ENCODE measurements at regions of chr5 and their contacts with region 1.

Region 1: DNA sequence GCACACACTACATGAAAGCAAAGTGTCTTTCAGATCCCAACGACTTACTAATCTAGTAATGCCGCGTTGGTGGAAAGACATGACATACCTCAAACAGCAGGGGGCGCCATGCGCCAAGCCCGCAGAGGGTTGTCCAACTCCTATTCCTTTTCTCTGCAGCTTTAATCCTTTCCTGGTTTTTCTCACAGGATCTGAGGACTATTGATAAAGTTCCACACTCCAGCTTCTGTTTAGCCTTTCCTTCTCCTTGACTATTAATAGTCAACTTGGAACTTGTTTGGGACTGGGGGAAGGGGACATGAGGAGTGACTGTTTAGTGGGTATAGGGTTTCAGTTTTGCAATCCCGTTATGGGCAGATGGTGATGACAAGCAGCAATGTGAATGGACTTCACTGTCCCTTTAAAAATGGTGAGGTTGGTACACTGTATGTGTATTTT is 62.9 kb downstream of the OTULIN start:
- DNase-seq: peak; percentile 77
- ATAC-seq: peak; percentile 65
- H3K4me3 ChIP-seq: no peak overlapping the region
- H3K4me3 Mint-ChIP-seq: no peak overlapping the region
- H3K27ac ChIP-seq: no peak overlapping the region
- H3K27ac Mint-ChIP-seq: no peak overlapping the region
- H3K4me1 ChIP-seq: peaks cover 0 to 12% of the 10 kb centered on the region in 2 donors
- H3K4me1 Mint-ChIP-seq: peaks cover 18% of the 10 kb centered on the region
- H3K27me3 ChIP-seq: no peaks in the 10 kb centered on the region
- H3K27me3 Mint-ChIP-seq: no peaks in the 10 kb centered on the region
- CTCF ChIP-seq: peak; percentile 99

Region 2: GRCh38 chr5:14685757-14686156 is 41.7 kb before region 1 on chr5:
- CTCF ChIA-PET with region 1: interaction called, 25 read pairs
- POLR2A ChIA-PET with region 1: no interaction called
- intact Hi-C with region 1: loop called (anchors 5 kb)
- DNase-seq: peak; percentile 70
- ATAC-seq: peak; percentile 79
- H3K4me3 ChIP-seq: no peak overlapping the region
- H3K4me3 Mint-ChIP-seq: peak overlapping the region; percentile 8
- H3K27ac ChIP-seq: no peak overlapping the region
- H3K27ac Mint-ChIP-seq: no peak overlapping the region
- H3K4me1 ChIP-seq: peaks cover 5 to 10% of the 10 kb centered on the region in 2 donors
- H3K4me1 Mint-ChIP-seq: peaks cover 9% of the 10 kb centered on the region
- H3K27me3 ChIP-seq: no peaks in the 10 kb centered on the region
- H3K27me3 Mint-ChIP-seq: no peaks in the 10 kb centered on the region
- CTCF ChIP-seq: peak; percentile 74

Region 3: GRCh38 chr5:14743601-14744295 is 16.3 kb after region 1 on chr5:
- CTCF ChIA-PET with region 1: interaction called, 12 read pairs
- POLR2A ChIA-PET with region 1: no interaction called
- intact Hi-C with region 1: no loop called
- DNase-seq: no peak
- ATAC-seq: no peak
- H3K4me3 ChIP-seq: no peak overlapping the region
- H3K4me3 Mint-ChIP-seq: peak overlapping the region; percentile 49
- H3K27ac ChIP-seq: peak overlapping the region in 1 of 2 donors; percentile 18
- H3K27ac Mint-ChIP-seq: peak overlapping the region; percentile 78
- H3K4me1 ChIP-seq: peaks cover 9 to 24% of the 10 kb centered on the region in 2 donors
- H3K4me1 Mint-ChIP-seq: peaks cover 22% of the 10 kb centered on the region
- H3K27me3 ChIP-seq: no peaks in the 10 kb centered on the region
- H3K27me3 Mint-ChIP-seq: no peaks in the 10 kb centered on the region
- CTCF ChIP-seq: no peak

Region 4: GRCh38 chr5:14946815-14947640 is 219.6 kb after region 1 on chr5:
- CTCF ChIA-PET with region 1: interaction called, 23 read pairs
- POLR2A ChIA-PET with region 1: no interaction called
- intact Hi-C with region 1: loop called (anchors 2 kb)
- DNase-seq: peak; percentile 67
- ATAC-seq: peak; percentile 80
- H3K4me3 ChIP-seq: no peak overlapping the region
- H3K4me3 Mint-ChIP-seq: no peak overlapping the region
- H3K27ac ChIP-seq: no peak overlapping the region
- H3K27ac Mint-ChIP-seq: no peak overlapping the region
- H3K4me1 ChIP-seq: no peaks in the 10 kb centered on the region
- H3K4me1 Mint-ChIP-seq: no peaks in the 10 kb centered on the region
- H3K27me3 ChIP-seq: peaks cover 0 to 9% (median 2%) of the 10 kb centered on the region in 4 experiments
- H3K27me3 Mint-ChIP-seq: peaks cover 28% of the 10 kb centered on the region
- CTCF ChIP-seq: peak; percentile 69

Region 5: GRCh38 chr5:15003511-15003920 is 276.1 kb after region 1 on chr5:
- CTCF ChIA-PET with region 1: interaction called, 201 read pairs
- POLR2A ChIA-PET with region 1: no interaction called
- intact Hi-C with region 1: loop called (anchors 1 kb)
- DNase-seq: peak; percentile 82
- ATAC-seq: peak; percentile 94
- H3K4me3 ChIP-seq: no peak overlapping the region
- H3K4me3 Mint-ChIP-seq: no peak overlapping the region
- H3K27ac ChIP-seq: no peak overlapping the region
- H3K27ac Mint-ChIP-seq: no peak overlapping the region
- H3K4me1 ChIP-seq: peaks cover 11 to 14% of the 10 kb centered on the region in 2 donors
- H3K4me1 Mint-ChIP-seq: peaks cover 16% of the 10 kb centered on the region
- H3K27me3 ChIP-seq: peaks cover 0 to 3% (median 0%) of the 10 kb centered on the region in 4 experiments
- H3K27me3 Mint-ChIP-seq: peaks cover 5% of the 10 kb centered on the region
- CTCF ChIP-seq: peak; percentile 89

Region 6: DNA sequence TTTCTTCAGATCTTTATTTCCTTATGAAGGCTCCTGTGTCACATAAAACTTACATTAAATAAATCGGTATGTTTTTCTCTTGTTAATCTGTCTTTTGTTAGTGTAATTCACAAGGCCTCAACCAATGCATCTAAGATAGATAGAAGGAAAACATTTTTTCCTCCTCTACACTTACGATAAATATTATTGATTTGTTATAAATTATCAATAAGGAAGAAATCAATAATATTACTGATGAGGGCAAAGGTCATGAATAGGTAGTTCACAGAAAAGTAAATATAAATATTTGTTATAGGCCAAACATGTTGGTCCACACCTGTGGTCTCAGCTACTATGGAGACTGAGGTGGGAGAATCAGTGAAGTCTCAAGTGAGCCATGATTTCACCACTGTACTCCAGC is 1480.5 kb after region 1 on chr5:
- CTCF ChIA-PET with region 1: no interaction called
- POLR2A ChIA-PET with region 1: no interaction called
- intact Hi-C with region 1: no loop called
- DNase-seq: no peak
- ATAC-seq: no peak
- H3K4me3 ChIP-seq: no peak overlapping the region
- H3K4me3 Mint-ChIP-seq: no peak overlapping the region
- H3K27ac ChIP-seq: no peak overlapping the region
- H3K27ac Mint-ChIP-seq: no peak overlapping the region
- H3K4me1 ChIP-seq: no peaks in the 10 kb centered on the region
- H3K4me1 Mint-ChIP-seq: no peaks in the 10 kb centered on the region
- H3K27me3 ChIP-seq: no peaks in the 10 kb centered on the region
- H3K27me3 Mint-ChIP-seq: no peaks in the 10 kb centered on the region
- CTCF ChIP-seq: no peak

Measured in B cell (primary cell).